ENCODE measurements at regions of chr17 and their contacts with region 1.

Region 1: DNA sequence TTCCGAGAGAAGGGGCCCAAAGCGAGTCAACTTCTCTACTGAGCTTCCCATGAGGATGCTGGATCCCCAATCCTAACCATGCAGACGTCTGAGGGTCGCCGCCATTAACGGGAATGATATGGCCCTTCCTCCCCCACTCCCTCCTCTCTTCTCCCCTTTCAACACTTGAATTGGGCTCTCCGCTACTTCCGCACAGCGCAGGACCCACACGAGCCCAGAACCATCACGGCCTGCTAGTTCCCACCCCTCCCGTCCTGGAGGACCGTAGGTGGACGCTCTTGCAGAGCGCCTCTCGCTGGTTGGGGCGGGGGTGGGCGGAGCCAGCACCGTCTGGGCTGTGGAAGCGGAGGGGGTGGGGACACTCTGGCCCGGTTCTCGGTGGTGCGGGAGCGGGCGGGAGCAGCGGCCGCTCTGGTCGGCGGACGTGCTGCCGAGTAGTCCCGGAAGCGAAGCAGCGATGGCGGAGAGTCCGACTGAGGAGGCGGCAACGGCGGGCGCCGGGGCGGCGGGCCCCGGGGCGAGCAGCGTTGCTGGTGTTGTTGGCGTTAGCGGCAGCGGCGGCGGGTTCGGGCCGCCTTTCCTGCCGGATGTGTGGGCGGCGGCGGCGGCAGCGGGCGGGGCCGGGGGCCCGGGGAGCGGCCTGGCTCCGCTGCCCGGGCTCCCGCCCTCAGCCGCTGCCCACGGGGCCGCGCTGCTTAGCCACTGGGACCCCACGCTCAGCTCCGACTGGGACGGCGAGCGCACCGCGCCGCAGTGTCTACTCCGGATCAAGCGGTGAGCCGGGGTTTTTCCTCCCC is at the start of gene UBE2Z:
- DNase-seq: peak; percentile 98
- H3K4me3 ChIP-seq: peak within 1 kb of the TSS; percentile 89
- H3K27ac ChIP-seq: peak within 1 kb of the TSS; percentile 94
- H3K4me1 ChIP-seq: peaks cover 16% of the 10 kb centered on the region
- H3K27me3 ChIP-seq: no peaks in the 10 kb centered on the region
- CTCF ChIP-seq: peak; percentile 42
- total RNA-seq, gene UBE2Z: 108 and 114 TPM in 2 replicates

Region 2: GRCh38 chr17:48610282-48611211 is 297.7 kb before region 1 on chr17 and contains the start of gene HOXB7:
- CTCF ChIA-PET with region 1: no interaction called
- POLR2A ChIA-PET with region 1: no interaction called
- intact Hi-C with region 1: no loop called
- DNase-seq: peak; percentile 87
- H3K4me3 ChIP-seq: peak within 1 kb of the TSS; percentile 87
- H3K27ac ChIP-seq: peak within 1 kb of the TSS; percentile 96
- H3K4me1 ChIP-seq: peaks cover 30% of the 10 kb centered on the region
- H3K27me3 ChIP-seq: no peaks in the 10 kb centered on the region
- CTCF ChIP-seq: no peak
- total RNA-seq, gene HOXB7: 32.2 and 37.9 TPM in 2 replicates

Region 3: DNA sequence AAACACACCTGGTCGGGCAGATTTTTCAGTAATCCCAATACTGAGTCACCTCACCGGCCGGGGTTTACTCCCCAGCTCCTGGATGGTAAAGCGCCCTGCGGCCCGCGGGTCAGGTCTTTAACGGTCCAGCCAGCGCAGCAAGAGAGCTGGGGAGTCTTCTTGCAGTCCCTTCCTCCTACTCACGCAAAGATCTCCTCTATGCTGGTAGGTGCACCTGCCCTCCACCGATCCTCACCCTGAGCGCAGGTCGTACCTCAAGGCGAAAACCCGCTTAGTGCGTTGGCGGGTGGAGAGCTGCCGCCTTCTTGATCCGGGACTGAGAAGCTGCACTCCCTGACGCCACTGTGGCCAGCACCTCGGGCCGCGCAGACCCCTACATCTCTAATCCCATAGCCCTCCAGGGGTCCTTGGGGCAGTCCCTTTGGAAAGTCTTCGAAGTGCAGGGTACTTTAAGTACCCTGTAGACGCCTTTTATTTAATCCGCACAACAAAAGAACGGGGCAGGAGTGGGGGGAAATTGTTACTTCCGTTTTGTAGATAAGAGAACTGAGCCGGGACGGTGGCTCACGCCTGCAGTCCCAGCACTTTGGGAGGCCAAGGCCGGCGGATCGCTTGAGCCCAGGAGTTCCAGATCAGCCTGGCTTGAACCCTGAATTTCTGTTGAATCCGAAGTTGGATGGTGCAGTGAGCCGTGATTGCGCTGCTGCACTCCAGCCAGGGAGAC is 169.3 kb before region 1 on chr17:
- CTCF ChIA-PET with region 1: no interaction called
- POLR2A ChIA-PET with region 1: no interaction called
- intact Hi-C with region 1: no loop called
- DNase-seq: no peak
- H3K4me3 ChIP-seq: no peak overlapping the region
- H3K27ac ChIP-seq: no peak overlapping the region
- H3K4me1 ChIP-seq: no peaks in the 10 kb centered on the region
- H3K27me3 ChIP-seq: no peaks in the 10 kb centered on the region
- CTCF ChIP-seq: no peak

Region 4: GRCh38 chr17:48871551-48872351 is 36.5 kb before region 1 on chr17:
- CTCF ChIA-PET with region 1: no interaction called
- POLR2A ChIA-PET with region 1: interaction called, 15 read pairs
- intact Hi-C with region 1: no loop called
- DNase-seq: no peak
- H3K4me3 ChIP-seq: no peak overlapping the region
- H3K27ac ChIP-seq: no peak overlapping the region
- H3K4me1 ChIP-seq: no peaks in the 10 kb centered on the region
- H3K27me3 ChIP-seq: no peaks in the 10 kb centered on the region
- CTCF ChIP-seq: no peak

Region 5: DNA sequence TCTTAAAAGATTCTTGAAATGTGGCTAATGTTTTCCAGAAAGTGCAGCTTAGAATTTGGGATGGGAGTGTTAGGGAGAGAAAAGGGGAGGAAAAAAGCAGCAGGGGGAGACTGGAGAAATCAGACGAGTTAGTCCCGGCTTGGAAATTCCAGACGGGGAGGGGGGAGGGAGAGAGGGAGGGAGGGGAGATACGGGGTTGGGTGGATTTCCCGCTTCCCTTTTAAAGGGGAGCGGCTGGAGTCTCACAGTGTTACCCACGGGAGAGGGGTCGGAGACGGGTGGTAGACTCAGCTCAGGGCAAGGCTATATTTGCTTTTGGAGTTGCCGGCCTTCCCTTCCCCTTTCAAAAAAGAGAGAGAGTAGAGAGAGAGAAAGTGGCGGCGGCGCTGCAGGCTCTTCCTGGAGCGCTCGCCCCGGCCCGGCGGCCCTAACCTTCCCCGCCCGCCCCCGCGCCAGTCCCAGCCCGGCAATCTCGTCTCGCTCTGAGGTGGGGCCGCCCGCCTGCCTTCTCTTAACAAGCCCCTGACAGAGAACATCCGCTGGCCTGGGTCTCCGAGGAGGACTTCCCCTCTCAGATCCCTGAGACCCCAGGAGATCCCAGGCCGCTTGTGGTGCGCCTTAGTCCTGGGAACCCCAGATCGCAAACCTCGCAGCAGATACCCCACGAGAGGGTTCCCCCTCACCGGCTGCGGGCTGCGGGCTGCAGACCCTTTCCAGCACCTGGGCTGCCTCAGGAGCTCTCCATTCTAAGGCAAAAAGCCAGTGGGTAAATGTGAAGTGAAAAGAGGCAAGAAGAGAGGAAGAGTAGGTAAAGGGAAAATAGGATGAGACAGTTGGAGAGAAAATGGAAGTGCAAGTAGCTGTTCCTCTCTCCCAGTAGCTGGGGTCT is 95.6 kb after region 1 on chr17:
- CTCF ChIA-PET with region 1: no interaction called
- POLR2A ChIA-PET with region 1: no interaction called
- intact Hi-C with region 1: no loop called
- DNase-seq: peak; percentile 68
- H3K4me3 ChIP-seq: peak overlapping the region; percentile 97
- H3K27ac ChIP-seq: peak overlapping the region; percentile 100
- H3K4me1 ChIP-seq: peaks cover 45% of the 10 kb centered on the region
- H3K27me3 ChIP-seq: no peaks in the 10 kb centered on the region
- CTCF ChIP-seq: 0 out of 2 replicates have a peak, but pooled peaks have one; percentile 13

Region 6: DNA sequence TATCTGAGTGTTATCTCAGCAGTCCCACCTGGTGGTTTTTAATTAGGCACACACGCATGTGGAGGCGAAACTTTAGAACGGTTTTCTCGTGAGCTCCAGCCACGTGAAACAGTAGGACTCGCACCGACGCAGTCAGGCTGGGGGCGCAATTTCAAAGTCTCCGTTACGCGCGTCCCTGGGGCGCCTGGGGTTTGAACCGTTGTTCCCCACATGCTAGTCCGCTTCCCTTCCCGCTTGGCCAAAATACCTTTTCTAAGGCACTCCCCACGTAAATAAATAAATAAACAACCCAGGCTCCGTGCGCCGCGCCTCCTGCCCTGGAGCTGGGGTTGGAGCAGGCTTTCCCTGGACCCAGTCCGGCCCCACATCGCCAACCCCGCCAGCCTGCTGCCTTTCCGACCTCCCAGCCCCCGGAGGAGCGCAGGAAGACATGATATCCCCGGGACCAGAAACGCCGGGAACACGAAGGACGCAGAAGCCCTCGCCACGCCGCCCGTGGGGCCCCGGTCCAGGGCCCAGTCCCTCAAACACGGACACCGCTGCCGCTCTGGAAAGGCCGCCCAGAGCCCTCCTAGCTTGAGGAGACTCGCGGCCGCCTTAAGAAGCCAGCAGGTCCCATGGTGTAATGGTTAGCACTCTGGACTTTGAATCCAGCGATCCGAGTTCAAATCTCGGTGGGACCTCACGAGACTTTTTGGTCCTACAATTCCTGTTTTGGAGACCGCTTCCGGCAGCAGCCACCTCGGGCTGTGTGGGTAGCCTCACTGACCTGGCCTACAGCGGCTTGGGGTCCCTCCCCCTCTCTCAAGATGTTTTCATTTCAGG is 283.9 kb after region 1 on chr17:
- CTCF ChIA-PET with region 1: no interaction called
- POLR2A ChIA-PET with region 1: no interaction called
- intact Hi-C with region 1: loop called (anchors 10 kb)
- DNase-seq: peak; percentile 94
- H3K4me3 ChIP-seq: peak overlapping the region; percentile 82
- H3K27ac ChIP-seq: peak overlapping the region; percentile 99
- H3K4me1 ChIP-seq: peaks cover 11% of the 10 kb centered on the region
- H3K27me3 ChIP-seq: no peaks in the 10 kb centered on the region
- CTCF ChIP-seq: peak; percentile 60